ENCODE measurements at regions of chr1 and their contacts with region 1.

Region 1: GRCh38 chr1:151346769-151347522 is at the start of gene RFX5:
- DNase-seq: peak; percentile 88 to 97 (median 95)
- H3K4me3 ChIP-seq: peak within 1 kb of the TSS; percentile 97
- H3K4me3 Mint-ChIP-seq: peak within 1 kb of the TSS; percentile 85 to 95 (median 93)
- H3K27ac ChIP-seq: peak within 1 kb of the TSS; percentile 98
- H3K27ac Mint-ChIP-seq: peak within 1 kb of the TSS; percentile 95 to 100 (median 98)
- H3K4me1 ChIP-seq: peaks cover 23% of the 10 kb centered on the region
- H3K4me1 Mint-ChIP-seq: peaks cover 28 to 43% (median 38%) of the 10 kb centered on the region in 3 donors
- H3K27me3 ChIP-seq: no peaks in the 10 kb centered on the region
- H3K27me3 Mint-ChIP-seq: peaks cover 0 to 2% of the 10 kb centered on the region in 2 donors
- total RNA-seq, gene RFX5: 77.2 to 77.4 TPM

Region 2: DNA sequence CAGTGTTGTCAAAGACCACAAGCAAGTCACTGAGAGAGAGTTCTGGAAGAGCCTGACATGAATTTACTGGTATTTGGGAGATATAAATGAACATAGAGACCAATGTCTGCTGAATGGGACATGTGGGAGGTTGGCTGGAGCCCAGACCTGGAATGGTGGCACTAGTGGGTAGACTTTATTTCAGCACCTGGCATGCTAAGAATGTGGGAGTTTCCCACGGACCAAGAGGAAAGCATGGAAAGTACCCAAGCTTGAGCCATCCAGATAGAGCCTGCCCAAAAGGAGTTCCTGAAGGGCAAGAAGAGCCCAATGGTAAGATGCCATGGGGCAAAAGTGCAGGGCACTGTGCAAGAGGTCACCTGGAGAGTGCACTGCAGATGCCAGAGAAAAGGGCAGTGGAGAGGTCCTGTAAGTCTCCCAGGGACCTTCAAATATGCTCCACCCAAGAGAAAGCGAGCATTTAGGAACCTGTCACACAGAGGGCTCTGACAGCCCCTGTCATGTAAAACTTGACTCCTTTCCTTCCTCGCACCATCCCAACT is 73.0 kb before region 1 on chr1:
- CTCF ChIA-PET with region 1: no interaction called
- POLR2A ChIA-PET with region 1: no interaction called
- DNase-seq: no peak
- H3K4me3 ChIP-seq: no peak overlapping the region
- H3K4me3 Mint-ChIP-seq: no peak overlapping the region
- H3K27ac ChIP-seq: no peak overlapping the region
- H3K27ac Mint-ChIP-seq: peak overlapping the region in 1 of 8 donors; percentile 60
- H3K4me1 ChIP-seq: no peaks in the 10 kb centered on the region
- H3K4me1 Mint-ChIP-seq: no peaks in the 10 kb centered on the region
- H3K27me3 ChIP-seq: no peaks in the 10 kb centered on the region
- H3K27me3 Mint-ChIP-seq: peaks cover 0 to 2% of the 10 kb centered on the region in 2 donors

Region 3: GRCh38 chr1:151327223-151327902 is 19.6 kb before region 1 on chr1 and contains the start of gene PI4KB:
- CTCF ChIA-PET with region 1: interaction called, 4 read pairs
- POLR2A ChIA-PET with region 1: interaction called, 13 read pairs
- DNase-seq: peak; percentile 80 to 95 (median 92)
- H3K4me3 ChIP-seq: peak within 1 kb of the TSS; percentile 85
- H3K4me3 Mint-ChIP-seq: peak within 1 kb of the TSS; percentile 91 to 99 (median 93)
- H3K27ac ChIP-seq: peak within 1 kb of the TSS; percentile 83
- H3K27ac Mint-ChIP-seq: peak within 1 kb of the TSS; percentile 86 to 100 (median 98)
- H3K4me1 ChIP-seq: peaks cover 25% of the 10 kb centered on the region
- H3K4me1 Mint-ChIP-seq: peaks cover 36 to 49% (median 49%) of the 10 kb centered on the region in 3 donors
- H3K27me3 ChIP-seq: no peaks in the 10 kb centered on the region
- H3K27me3 Mint-ChIP-seq: no peaks in the 10 kb centered on the region
- total RNA-seq, gene PI4KB: 59.9 to 65.5 TPM

Measured in CD8-positive, alpha-beta memory T cell (primary cell).